Activated CD4-positive, alpha-beta T cell treated with anti-CD3 and anti-CD28 coated beads for 36 hours (primary cell): ENCODE measurements at regions of chr3 and their contacts with region 1.

Region 1: GRCh38 chr3:107676469-107677309 is 153.9 kb downstream of the BBX start:
- DNase-seq: no peak
- ATAC-seq: peak; percentile 49
- H3K4me3 Mint-ChIP-seq: no peak overlapping the region
- H3K27ac Mint-ChIP-seq: no peak overlapping the region
- H3K4me1 Mint-ChIP-seq: peaks cover 34% of the 10 kb centered on the region
- H3K27me3 Mint-ChIP-seq: no peaks in the 10 kb centered on the region

Region 2: GRCh38 chr3:105957722-105958618 is 1718.7 kb before region 1 on chr3:
- CTCF ChIA-PET with region 1: no interaction called
- POLR2A ChIA-PET with region 1: no interaction called
- intact Hi-C with region 1: no loop called
- DNase-seq: no peak
- ATAC-seq: no peak
- H3K4me3 Mint-ChIP-seq: no peak overlapping the region
- H3K27ac Mint-ChIP-seq: no peak overlapping the region
- H3K4me1 Mint-ChIP-seq: no peaks in the 10 kb centered on the region
- H3K27me3 Mint-ChIP-seq: no peaks in the 10 kb centered on the region

Region 3: GRCh38 chr3:107450254-107450893 is 226.3 kb before region 1 on chr3:
- CTCF ChIA-PET with region 1: no interaction called
- POLR2A ChIA-PET with region 1: no interaction called
- intact Hi-C with region 1: no loop called
- DNase-seq: peak; percentile 43
- ATAC-seq: peak; percentile 95
- H3K4me3 Mint-ChIP-seq: no peak overlapping the region
- H3K27ac Mint-ChIP-seq: no peak overlapping the region
- H3K4me1 Mint-ChIP-seq: peaks cover 10% of the 10 kb centered on the region
- H3K27me3 Mint-ChIP-seq: no peaks in the 10 kb centered on the region

Region 4: DNA sequence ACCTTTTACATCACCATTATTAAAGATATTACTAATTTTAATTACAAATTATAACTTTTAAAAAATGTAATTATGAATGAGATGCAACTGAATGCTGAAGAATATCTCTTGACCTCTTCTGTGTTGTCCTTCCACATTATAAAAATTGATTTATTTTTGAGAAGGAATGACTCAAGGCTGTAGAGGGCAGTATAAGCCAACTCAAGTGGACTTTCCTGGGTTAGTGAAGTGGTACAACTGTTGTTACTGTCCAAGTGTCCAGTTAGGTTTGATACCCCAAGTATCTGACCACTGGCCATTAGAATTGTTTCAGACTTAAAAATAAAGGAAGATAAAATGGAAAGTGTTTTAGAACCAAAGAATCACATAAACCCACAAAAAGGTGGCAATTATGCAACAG is 102.0 kb before region 1 on chr3:
- CTCF ChIA-PET with region 1: interaction called, 10 read pairs
- POLR2A ChIA-PET with region 1: no interaction called
- intact Hi-C with region 1: no loop called
- DNase-seq: no peak
- ATAC-seq: no peak
- H3K4me3 Mint-ChIP-seq: no peak overlapping the region
- H3K27ac Mint-ChIP-seq: no peak overlapping the region
- H3K4me1 Mint-ChIP-seq: peaks cover 26% of the 10 kb centered on the region
- H3K27me3 Mint-ChIP-seq: no peaks in the 10 kb centered on the region

Region 5: DNA sequence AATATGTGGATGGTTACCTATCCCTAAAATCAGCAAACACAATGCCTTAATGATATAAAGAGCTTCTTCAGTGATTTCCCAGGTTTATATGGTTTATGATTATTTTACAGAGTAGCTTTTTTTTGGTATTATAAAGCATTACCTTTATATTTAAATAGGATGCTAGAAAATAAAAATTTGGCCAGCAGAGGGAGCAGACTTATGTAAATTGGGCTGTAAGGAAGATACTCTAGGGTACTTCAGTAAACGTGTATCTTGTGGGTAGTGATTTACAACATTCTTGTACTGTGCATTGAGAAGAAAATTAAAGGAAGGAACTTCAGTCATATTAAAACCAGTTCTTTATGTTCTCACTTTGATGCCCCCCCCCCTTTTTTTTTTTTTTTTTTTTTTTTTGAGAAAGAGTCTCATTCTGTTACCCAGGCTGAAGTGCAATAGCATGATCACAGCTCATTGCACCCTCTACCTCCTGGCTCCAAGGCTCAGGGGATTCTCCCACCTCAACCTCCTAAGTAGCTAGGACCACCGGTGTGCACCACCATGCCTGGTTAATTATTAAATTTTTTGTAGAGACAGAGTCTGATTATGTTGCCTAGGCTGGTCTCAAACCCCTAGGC is 13.9 kb after region 1 on chr3:
- CTCF ChIA-PET with region 1: interaction called, 71 read pairs
- POLR2A ChIA-PET with region 1: no interaction called
- intact Hi-C with region 1: no loop called
- DNase-seq: no peak
- ATAC-seq: peak; percentile 57
- H3K4me3 Mint-ChIP-seq: no peak overlapping the region
- H3K27ac Mint-ChIP-seq: no peak overlapping the region
- H3K4me1 Mint-ChIP-seq: peaks cover 13% of the 10 kb centered on the region
- H3K27me3 Mint-ChIP-seq: no peaks in the 10 kb centered on the region

Region 6: GRCh38 chr3:107740992-107741896 is 64.6 kb after region 1 on chr3:
- CTCF ChIA-PET with region 1: interaction called, 75 read pairs
- POLR2A ChIA-PET with region 1: no interaction called
- intact Hi-C with region 1: loop called (anchors 1 to 5 kb)
- DNase-seq: no peak
- ATAC-seq: no peak
- H3K4me3 Mint-ChIP-seq: no peak overlapping the region
- H3K27ac Mint-ChIP-seq: no peak overlapping the region
- H3K4me1 Mint-ChIP-seq: no peaks in the 10 kb centered on the region
- H3K27me3 Mint-ChIP-seq: no peaks in the 10 kb centered on the region

Region 7: DNA sequence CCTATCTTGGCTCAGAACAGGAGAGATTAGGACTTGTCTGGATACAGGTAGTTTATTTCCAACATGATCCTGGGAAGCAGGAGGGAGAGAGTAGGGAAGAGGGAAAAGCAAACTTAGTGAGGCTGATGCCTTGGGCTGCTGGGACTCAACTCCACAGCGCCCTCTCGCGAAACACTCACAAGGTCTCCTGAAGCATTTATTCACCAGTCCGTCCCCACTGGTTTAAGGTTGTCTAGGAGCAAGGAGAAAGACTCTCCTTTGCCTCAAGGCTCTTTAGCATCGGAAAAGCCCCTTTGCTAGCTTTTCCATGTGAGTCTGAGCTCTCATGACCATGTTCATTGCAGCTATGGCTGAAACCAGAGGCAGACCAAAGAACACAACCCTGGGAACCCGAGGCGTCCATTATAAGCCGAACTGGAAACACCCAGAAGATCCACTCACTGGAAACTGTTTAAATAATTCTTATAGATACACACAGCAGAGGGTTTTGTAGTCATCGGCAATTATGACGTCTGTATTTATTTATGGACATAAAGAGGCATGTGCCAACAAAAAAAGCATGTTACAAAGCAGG is 169.7 kb after region 1 on chr3:
- CTCF ChIA-PET with region 1: interaction called, 7 read pairs
- POLR2A ChIA-PET with region 1: no interaction called
- intact Hi-C with region 1: loop called (anchors 5 to 10 kb)
- DNase-seq: peak; percentile 70
- ATAC-seq: no peak
- H3K4me3 Mint-ChIP-seq: no peak overlapping the region
- H3K27ac Mint-ChIP-seq: no peak overlapping the region
- H3K4me1 Mint-ChIP-seq: peaks cover 2% of the 10 kb centered on the region
- H3K27me3 Mint-ChIP-seq: peaks cover 2% of the 10 kb centered on the region

Region 8: GRCh38 chr3:108406661-108407206 is 730.0 kb after region 1 on chr3:
- CTCF ChIA-PET with region 1: no interaction called
- POLR2A ChIA-PET with region 1: no interaction called
- intact Hi-C with region 1: loop called in 1 of 2 experiments (anchors 5 kb)
- DNase-seq: peak; percentile 35
- ATAC-seq: peak; percentile 96
- H3K4me3 Mint-ChIP-seq: no peak overlapping the region
- H3K27ac Mint-ChIP-seq: no peak overlapping the region
- H3K4me1 Mint-ChIP-seq: peaks cover 10% of the 10 kb centered on the region
- H3K27me3 Mint-ChIP-seq: no peaks in the 10 kb centered on the region